ENCODE measurements at regions of chr4 and their contacts with region 1.

Region 1: GRCh38 chr4:142353149-142353738 is 492.9 kb downstream of the INPP4B start:
- DNase-seq: no peak
- H3K4me3 ChIP-seq: no peak overlapping the region
- H3K27ac ChIP-seq: no peak overlapping the region
- H3K4me1 ChIP-seq: peaks cover 0 to 12% of the 10 kb centered on the region in 2 experiments; a peak in 1 of 4 replicates
- H3K27me3 ChIP-seq: no peaks in the 10 kb centered on the region
- CTCF ChIP-seq: peak; percentile 93
- EP300 ChIP-seq: no peak
- RAD21 ChIP-seq: peak; percentile 89

Region 2: GRCh38 chr4:142339053-142339452 is 14.2 kb before region 1 on chr4:
- CTCF ChIA-PET with region 1: interaction called, 14 read pairs
- POLR2A ChIA-PET with region 1: no interaction called
- DNase-seq: no peak
- H3K4me3 ChIP-seq: no peak overlapping the region
- H3K27ac ChIP-seq: no peak overlapping the region
- H3K4me1 ChIP-seq: no peaks in the 10 kb centered on the region
- H3K27me3 ChIP-seq: no peaks in the 10 kb centered on the region
- CTCF ChIP-seq: no peak
- EP300 ChIP-seq: no peak
- RAD21 ChIP-seq: no peak

Region 3: GRCh38 chr4:142719854-142720541 is 366.8 kb after region 1 on chr4:
- CTCF ChIA-PET with region 1: interaction called, 55 read pairs
- POLR2A ChIA-PET with region 1: no interaction called
- DNase-seq: peak; percentile 45
- H3K4me3 ChIP-seq: no peak overlapping the region
- H3K27ac ChIP-seq: no peak overlapping the region
- H3K4me1 ChIP-seq: no peaks in the 10 kb centered on the region
- H3K27me3 ChIP-seq: no peaks in the 10 kb centered on the region
- CTCF ChIP-seq: peak; percentile 66
- EP300 ChIP-seq: no peak
- RAD21 ChIP-seq: peak; percentile 76

Region 4: GRCh38 chr4:142752202-142752786 is 399.1 kb after region 1 on chr4:
- CTCF ChIA-PET with region 1: no interaction called
- POLR2A ChIA-PET with region 1: no interaction called
- DNase-seq: no peak
- H3K4me3 ChIP-seq: no peak overlapping the region
- H3K27ac ChIP-seq: no peak overlapping the region
- H3K4me1 ChIP-seq: no peaks in the 10 kb centered on the region
- H3K27me3 ChIP-seq: no peaks in the 10 kb centered on the region
- CTCF ChIP-seq: no peak
- EP300 ChIP-seq: no peak
- RAD21 ChIP-seq: no peak

Measured in SK-N-SH (cell line).